Posterior vena cava (tissue), 2 donors: ENCODE measurements at regions of chr16 and their contacts with region 1.

Region 1: GRCh38 chr16:7561908-7562405 is 229.3 kb downstream of the RBFOX1 start:
- DNase-seq: no peak

Region 2: DNA sequence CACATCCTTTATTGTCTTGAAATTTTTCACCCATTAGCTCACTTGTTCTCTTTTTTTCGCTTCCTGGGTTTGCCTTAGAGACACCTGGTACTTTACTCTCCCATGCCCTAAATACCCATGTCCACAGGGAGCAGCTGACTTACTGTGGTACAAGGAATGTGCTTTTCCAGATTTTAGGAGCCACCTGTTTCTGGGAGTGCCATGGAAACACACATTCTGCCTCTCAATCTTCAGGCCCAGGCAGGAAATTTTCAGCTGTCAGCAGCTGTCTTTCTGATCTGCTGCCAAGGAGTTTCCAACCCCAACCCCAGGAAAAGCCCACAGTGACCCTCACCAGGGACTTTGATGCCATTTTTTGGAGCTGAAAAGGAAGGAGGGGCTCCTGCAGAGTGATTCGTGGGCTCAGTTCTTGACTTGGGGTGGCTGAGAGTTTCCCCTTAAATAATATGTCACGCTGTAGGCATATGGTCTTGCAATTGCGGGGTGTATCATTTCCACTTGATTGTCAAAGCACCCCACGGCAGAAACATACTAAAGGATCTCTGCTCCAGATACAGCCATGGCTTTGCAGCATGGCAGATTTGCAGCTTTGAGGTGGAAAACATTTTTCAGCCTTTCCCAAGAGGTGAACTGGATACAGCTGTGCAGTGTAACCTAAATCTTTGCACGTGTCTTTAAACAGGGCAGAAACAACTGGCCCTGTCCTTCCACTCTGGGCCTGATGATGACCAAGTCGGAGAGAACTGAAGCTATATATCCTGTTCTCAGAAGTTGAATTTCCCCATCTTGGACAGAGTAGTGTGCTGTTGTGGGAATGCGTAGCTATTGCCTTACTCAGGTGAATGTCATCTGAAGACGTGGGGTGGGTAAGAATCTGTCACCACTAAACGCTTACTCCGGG is 210.1 kb before region 1 on chr16:
- intact Hi-C with region 1: loop called in 1 of 2 experiments (anchors 10 kb)
- DNase-seq: no peak